Activated CD4-positive, alpha-beta T cell treated with anti-CD3 and anti-CD28 coated beads, Interleukin-2, amount 10 ng/mL, durations not matched to agents 24 days and 14 days (primary cell): ENCODE measurements at regions of chr3 and their contacts with region 1.

Region 1: GRCh38 chr3:101988591-101988990 is 139.3 kb downstream of the NFKBIZ start:
- DNase-seq: peak; percentile 70
- H3K4me3 Mint-ChIP-seq: peak overlapping the region; percentile 31
- H3K27ac Mint-ChIP-seq: peak overlapping the region; percentile 73
- H3K4me1 Mint-ChIP-seq: peaks cover 39% of the 10 kb centered on the region
- H3K27me3 Mint-ChIP-seq: peaks cover 21% of the 10 kb centered on the region

Region 2: DNA sequence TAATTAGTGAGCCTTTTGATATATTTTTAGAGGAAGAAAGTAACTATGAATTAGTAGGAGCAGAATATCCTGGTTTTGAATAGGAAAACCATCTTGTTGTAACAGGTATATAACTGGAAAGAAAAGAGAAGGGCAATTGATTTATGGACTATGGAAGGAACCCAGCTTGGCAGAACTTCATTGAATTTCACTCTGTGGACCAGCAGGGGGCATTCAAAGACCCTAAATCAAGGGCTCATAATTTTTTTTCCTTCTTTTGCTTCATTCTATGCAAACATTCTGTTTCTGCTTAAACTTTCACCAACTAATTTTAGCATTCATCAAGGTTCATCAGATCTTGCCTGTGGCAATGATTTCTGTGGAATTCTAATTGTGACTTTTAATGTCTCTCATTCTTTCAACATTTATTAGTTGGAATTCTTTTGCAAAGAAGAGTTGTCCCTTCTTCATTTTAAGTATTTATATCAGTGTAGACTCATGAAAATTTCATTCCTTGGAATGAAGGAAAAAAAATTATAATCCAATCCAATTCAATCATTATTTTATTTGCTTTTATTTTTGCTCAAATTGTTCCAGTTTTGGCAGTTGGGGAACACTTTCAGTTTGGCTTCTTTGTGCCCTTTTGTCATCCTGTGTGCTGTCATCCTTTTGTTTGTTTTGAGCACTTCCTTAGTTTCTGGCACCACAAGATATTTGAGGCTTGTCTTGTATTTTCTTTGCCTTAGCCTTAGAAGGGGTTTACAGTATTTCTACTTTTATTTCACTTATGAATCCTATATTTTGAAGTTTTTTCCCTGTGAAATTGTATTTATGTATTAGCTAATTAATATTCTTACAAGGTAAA is 179.2 kb before region 1 on chr3:
- intact Hi-C with region 1: loop called (anchors 5 kb)
- DNase-seq: peak; percentile 80
- H3K4me3 Mint-ChIP-seq: no peak overlapping the region
- H3K27ac Mint-ChIP-seq: peak overlapping the region; percentile 36
- H3K4me1 Mint-ChIP-seq: peaks cover 37% of the 10 kb centered on the region
- H3K27me3 Mint-ChIP-seq: no peaks in the 10 kb centered on the region

Region 3: DNA sequence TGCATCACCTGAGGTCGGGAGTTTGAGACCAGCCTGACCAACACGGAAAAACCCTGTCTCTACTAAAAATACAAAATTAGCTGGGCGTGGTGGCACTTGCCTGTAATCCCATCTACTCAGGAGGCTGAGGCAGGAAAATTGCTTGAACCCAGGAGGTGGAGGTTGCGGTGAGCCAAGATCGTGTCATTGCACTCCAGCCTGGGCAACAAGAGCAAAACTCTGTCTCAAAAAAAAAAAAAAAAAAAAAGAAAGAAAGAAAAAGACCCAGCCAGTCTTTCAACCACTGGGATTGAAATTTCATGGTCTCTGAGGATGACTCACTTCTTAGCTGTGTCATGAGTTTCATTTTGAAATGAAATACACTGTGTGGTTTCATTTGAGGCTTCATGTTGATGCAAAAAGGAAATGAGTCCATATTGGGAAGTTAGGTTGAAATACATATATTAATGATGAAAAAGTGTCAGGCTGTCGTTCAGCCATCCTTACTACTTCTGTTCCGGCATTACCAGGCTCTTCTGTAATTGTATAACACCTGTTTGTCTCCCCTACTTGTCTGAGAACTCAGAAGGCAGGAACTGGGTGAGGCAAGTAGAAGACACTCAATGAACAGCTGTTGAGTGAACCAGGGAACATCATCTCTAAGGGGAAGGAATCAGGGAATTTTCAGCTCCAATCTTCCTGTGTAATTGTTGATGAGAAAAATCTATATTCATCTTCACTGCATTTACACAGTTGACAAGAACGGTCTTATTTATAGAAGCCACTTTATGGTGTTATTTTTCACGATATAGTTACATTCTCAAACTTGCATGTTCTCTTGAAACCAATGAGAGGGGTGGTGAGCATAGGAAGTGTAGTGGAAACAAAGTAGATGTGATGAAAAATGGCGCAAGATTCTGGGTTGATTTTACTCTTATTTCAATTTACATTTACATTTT is 51.9 kb before region 1 on chr3:
- intact Hi-C with region 1: loop called (anchors 1 kb)
- DNase-seq: peak; percentile 79
- H3K4me3 Mint-ChIP-seq: peak overlapping the region; percentile 55
- H3K27ac Mint-ChIP-seq: peak overlapping the region; percentile 73
- H3K4me1 Mint-ChIP-seq: peaks cover 27% of the 10 kb centered on the region
- H3K27me3 Mint-ChIP-seq: peaks cover 15% of the 10 kb centered on the region